Activated T-helper 2 cell treated with anti-CD3 and anti-CD28 coated beads, Interferon-gamma antibody, Interleukin-2, Interleukin-4, amounts not matched to agents 10 μg/mL and 5 μg/mL and 100 μg/mL, durations not matched to agents 14 hours and 24 hours and 36 hours (primary cell): ENCODE measurements at regions of chr4 and their contacts with region 1.

Region 1: GRCh38 chr4:147943159-147943638 is 211.3 kb downstream of the ARHGAP10 start:
- DNase-seq: no peak
- H3K4me3 Mint-ChIP-seq: no peak overlapping the region
- H3K27ac Mint-ChIP-seq: peak overlapping the region; percentile 1
- H3K4me1 Mint-ChIP-seq: peaks cover 31% of the 10 kb centered on the region
- H3K27me3 Mint-ChIP-seq: no peaks in the 10 kb centered on the region

Region 2: GRCh38 chr4:147683717-147684700 is 259.2 kb before region 1 on chr4 and contains the start of gene PRMT9:
- intact Hi-C with region 1: loop called (anchors 5 kb)
- DNase-seq: peak; percentile 84
- H3K4me3 Mint-ChIP-seq: peak within 1 kb of the TSS; percentile 93
- H3K27ac Mint-ChIP-seq: peak within 1 kb of the TSS; percentile 93
- H3K4me1 Mint-ChIP-seq: peaks cover 26% of the 10 kb centered on the region
- H3K27me3 Mint-ChIP-seq: peaks cover 3% of the 10 kb centered on the region
- total RNA-seq, gene PRMT9: 8.4 and 8.9 TPM in 2 replicates

Region 3: GRCh38 chr4:147799986-147800555 is 143.1 kb before region 1 on chr4:
- intact Hi-C with region 1: loop called (anchors 1 kb)
- DNase-seq: peak; percentile 70
- H3K4me3 Mint-ChIP-seq: peak overlapping the region; percentile 67
- H3K27ac Mint-ChIP-seq: peak overlapping the region; percentile 93
- H3K4me1 Mint-ChIP-seq: peaks cover 77% of the 10 kb centered on the region
- H3K27me3 Mint-ChIP-seq: no peaks in the 10 kb centered on the region

Region 4: DNA sequence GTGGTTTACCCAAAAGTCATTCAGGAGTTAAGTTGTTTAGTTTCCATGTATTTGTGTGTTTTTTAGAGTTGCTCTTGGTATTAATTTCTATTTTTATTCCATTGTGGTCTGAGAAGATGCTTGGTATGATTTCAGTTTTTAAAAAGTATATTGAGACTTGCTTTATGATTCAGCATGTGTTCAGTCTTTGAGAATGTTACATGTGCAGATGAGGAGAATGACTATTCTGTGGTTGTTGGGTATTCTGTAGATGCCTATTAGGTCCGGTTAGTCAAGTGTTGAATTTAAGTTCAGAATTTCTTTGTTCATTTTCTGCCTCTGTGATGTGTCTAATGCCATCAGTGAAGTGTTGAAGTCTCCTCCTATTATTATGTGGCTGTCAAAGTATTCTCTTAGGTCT is 38.1 kb after region 1 on chr4:
- intact Hi-C with region 1: loop called (anchors 2 kb)
- DNase-seq: no peak
- H3K4me3 Mint-ChIP-seq: no peak overlapping the region
- H3K27ac Mint-ChIP-seq: no peak overlapping the region
- H3K4me1 Mint-ChIP-seq: peaks cover 26% of the 10 kb centered on the region
- H3K27me3 Mint-ChIP-seq: peaks cover 6% of the 10 kb centered on the region

Region 5: DNA sequence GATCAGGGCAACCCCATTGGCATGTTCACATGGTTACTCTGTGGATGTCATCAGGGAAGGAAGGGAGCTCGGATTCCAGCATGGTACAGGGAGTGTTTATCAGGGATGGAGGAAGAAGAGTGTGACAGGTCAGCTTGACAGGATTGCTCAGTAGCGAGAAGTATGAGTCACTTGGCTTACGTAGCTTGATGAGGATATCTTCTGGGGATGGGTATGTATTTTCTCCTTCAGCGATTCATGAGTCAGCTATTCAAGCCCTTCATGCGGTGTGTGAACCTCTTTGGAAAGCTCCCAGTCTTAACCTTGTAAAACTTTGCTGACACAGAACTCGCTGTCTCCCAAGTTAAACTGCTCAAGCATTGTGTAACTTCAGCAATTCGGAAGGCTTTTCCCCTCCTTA is 64.1 kb after region 1 on chr4:
- intact Hi-C with region 1: no loop called
- DNase-seq: no peak
- H3K4me3 Mint-ChIP-seq: no peak overlapping the region
- H3K27ac Mint-ChIP-seq: no peak overlapping the region
- H3K4me1 Mint-ChIP-seq: peaks cover 20% of the 10 kb centered on the region
- H3K27me3 Mint-ChIP-seq: no peaks in the 10 kb centered on the region

Region 6: DNA sequence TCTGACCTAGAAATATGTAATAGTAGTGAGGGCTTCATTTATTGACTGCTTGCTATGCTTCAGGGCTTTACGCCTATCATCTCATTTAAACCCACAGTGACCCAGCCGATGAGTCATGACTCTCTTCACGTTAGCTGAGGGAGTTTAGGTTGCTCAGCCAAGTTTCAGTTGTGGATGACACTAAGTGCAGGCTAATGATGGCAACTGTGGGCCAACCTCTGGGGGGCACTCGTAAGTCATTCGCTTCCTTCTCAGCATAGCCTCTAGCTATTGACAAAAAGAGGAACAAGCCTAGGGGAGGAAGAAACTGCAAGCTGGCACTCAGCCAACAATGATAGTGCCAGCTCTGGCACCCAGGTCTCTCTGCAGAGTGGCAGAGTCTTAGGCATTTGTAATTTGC is 113.7 kb after region 1 on chr4:
- intact Hi-C with region 1: loop called (anchors 5 kb)
- DNase-seq: peak; percentile 41
- H3K4me3 Mint-ChIP-seq: no peak overlapping the region
- H3K27ac Mint-ChIP-seq: no peak overlapping the region
- H3K4me1 Mint-ChIP-seq: peaks cover 64% of the 10 kb centered on the region
- H3K27me3 Mint-ChIP-seq: no peaks in the 10 kb centered on the region